ENCODE measurements at regions of chr19 and their contacts with region 1.

Region 1: GRCh38 chr19:2151339-2152229 is at the start of gene AP3D1:
- DNase-seq: peak; percentile 100
- H3K4me3 ChIP-seq: peak within 1 kb of the TSS; percentile 86 to 97 (median 96)
- H3K27ac ChIP-seq: peak within 1 kb of the TSS; percentile 53 to 97 (median 83)
- H3K4me1 ChIP-seq: peaks cover 17 to 29% of the 10 kb centered on the region in 2 donors
- H3K27me3 ChIP-seq: no peaks in the 10 kb centered on the region
- CTCF ChIP-seq: no peak
- POLR2A ChIP-seq: peak in 1 of 2 donors; percentile 36
- total RNA-seq, gene AP3D1: 51.3 to 193 (median 122) TPM

Region 2: GRCh38 chr19:2061495-2062381 is 89.8 kb before region 1 on chr19:
- intact Hi-C with region 1: no loop called
- DNase-seq: peak; percentile 99 to 100 (median 100)
- H3K4me3 ChIP-seq: peak overlapping the region in 2 of 4 donors; percentile 33 to 67
- H3K27ac ChIP-seq: peak overlapping the region; percentile 86 to 100 (median 98)
- H3K4me1 ChIP-seq: peaks cover 44 to 55% of the 10 kb centered on the region in 2 donors
- H3K27me3 ChIP-seq: no peaks in the 10 kb centered on the region
- CTCF ChIP-seq: no peak
- POLR2A ChIP-seq: peak; percentile 16 to 91

Region 3: DNA sequence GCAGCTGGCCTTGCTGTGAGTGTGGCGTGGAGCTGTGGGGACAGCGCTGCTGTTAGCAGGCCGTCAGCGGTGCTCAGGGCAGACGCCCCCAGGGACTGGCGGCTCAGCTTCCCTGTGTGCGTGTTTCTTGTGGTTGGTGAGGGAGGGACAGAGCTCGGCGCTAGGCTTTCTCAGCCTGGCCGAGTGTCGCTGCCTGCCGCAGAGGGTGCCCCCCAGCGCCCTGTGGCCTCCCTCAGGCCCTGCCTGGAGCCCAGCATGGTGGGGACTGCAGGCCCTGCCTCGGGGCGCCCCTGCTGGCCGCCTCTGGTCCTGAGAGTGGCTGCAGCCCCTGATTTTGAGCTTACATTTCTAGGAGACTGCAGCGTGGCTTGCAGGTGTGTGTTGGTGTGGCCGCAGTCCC is 47.6 kb after region 1 on chr19:
- intact Hi-C with region 1: no loop called
- DNase-seq: peak in 1 of 7 donors; percentile 58
- H3K4me3 ChIP-seq: no peak overlapping the region
- H3K27ac ChIP-seq: no peak overlapping the region
- H3K4me1 ChIP-seq: no peaks in the 10 kb centered on the region
- H3K27me3 ChIP-seq: no peaks in the 10 kb centered on the region
- CTCF ChIP-seq: peak in 2 of 6 experiments; percentile 12 to 14
- POLR2A ChIP-seq: no peak

Region 4: DNA sequence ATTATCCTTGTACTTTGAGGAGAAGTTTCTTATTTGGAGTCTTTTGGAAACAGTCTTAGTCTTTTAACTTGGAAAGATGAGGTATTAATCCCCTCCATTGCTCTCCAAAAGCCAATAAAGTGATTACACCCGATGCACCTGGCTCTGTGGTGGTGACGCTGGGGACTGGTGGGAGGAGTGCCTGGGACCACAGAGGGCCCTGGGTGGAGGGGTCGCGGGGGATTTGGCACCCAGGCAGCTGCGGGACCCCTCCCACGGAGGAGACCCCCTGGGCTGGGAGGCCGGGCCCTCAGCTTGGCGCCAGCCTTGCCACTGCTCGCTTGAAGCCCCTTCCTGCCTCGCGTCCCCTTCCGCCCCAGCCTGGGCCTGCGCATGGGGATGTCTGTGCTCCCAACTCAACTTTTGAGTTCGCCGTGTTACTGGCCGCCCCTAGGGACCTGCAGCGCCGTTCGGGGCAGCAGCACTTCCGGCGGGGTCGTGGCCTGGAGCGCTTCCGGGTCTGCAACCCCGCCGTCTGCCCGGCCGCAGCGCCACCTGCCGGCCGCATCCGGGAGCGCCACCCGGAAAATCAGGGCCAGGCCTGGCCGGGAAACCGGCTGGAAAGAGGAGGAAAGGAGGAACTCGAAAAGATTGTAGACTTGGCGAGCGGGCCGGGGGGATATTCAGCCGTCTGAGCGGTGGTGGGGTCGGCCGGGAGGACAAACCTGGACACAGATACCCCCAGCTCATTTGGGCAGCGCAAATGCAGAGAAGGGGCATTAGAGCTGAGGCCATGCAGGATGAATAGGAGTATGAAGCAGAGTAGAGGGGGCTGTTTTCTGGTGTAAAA is 122.0 kb after region 1 on chr19:
- intact Hi-C with region 1: loop called in 1 of 2 experiments (anchors 5 kb)
- DNase-seq: peak; percentile 65 to 84 (median 75)
- H3K4me3 ChIP-seq: peak overlapping the region in 1 of 4 donors; percentile 39
- H3K27ac ChIP-seq: peak overlapping the region in 4 of 5 donors; percentile 58 to 100 (median 77)
- H3K4me1 ChIP-seq: peaks cover 31 to 53% of the 10 kb centered on the region in 2 donors
- H3K27me3 ChIP-seq: no peaks in the 10 kb centered on the region
- CTCF ChIP-seq: peak; percentile 83 to 99 (median 97)
- POLR2A ChIP-seq: peak in 1 of 2 donors; percentile 13

Region 5: DNA sequence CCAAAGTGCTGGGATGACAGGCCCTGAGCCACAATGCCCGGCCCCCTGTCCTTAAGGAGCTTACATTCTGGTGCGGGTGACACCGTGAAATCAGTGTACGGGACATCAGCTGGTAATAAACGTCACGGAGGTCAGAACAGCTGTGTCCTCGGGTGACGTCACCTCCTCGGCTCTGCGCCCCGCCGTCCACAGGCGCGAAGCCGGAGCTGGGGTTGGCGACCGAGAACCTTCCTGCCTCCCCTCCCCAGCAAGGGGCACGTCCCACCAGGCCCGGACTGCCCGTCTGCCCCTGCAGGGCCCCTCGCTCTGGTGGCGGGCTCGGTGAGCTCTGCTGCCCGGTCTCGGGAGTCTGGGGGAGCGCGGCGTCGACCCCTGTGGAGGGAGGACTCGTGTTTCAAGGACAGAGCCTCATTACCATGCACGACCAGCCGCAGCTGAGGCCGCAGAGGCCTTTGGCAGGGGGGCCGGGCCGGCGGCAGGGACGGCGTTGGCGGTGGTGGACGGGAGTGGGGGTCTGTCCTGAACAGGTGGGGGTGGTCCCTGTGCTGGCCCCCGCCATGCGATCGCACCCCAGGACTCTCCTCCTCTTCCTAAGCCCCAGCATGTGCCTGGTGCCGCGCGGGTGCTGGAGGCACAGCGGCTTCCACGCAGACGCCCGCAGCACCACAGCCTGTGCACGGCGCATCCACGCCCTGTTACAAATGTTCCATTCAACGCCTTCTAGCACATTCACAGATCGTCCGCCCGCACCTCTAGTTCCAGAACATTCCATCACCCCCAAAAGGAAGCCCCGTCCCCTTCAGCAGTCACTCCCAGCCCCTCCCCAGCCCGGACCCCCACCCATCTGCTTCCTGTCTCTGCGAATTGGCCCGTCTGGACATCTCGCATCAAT is 151.0 kb after region 1 on chr19:
- intact Hi-C with region 1: no loop called
- DNase-seq: peak in 6 of 7 donors; percentile 56 to 80 (median 66)
- H3K4me3 ChIP-seq: no peak overlapping the region
- H3K27ac ChIP-seq: no peak overlapping the region
- H3K4me1 ChIP-seq: peaks cover 0 to 7% of the 10 kb centered on the region in 2 donors
- H3K27me3 ChIP-seq: peaks cover 24% of the 10 kb centered on the region
- CTCF ChIP-seq: no peak
- POLR2A ChIP-seq: no peak

Region 6: DNA sequence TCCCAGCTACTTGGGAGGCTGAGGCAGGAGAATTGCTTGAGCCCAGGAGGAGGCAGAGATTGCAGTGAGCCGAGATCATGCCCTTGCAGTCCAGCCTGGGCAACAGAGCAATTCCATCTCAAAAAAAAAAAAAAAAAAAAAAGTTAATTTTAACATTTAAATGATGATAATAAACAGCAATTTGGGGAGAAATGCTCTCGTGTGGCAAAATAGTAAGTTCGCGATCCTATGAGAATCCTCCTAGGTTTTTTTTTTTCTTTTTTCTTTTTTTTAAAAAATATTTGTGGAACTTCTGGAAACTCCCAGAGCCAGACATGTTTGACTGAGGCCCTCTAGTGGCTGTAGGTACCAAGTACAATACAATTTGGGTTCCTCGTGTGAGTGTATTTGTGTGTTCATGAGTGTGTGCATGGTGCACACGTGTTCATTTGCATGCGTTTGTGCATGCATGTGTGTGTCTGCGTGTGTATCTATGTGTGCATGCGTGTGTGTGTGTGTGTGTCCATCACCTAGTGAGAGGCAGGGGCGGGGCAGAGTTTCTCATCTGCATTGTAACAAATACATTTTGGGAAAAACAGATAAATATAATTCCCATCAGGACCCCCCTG is 239.6 kb after region 1 on chr19:
- intact Hi-C with region 1: loop called in 1 of 2 experiments (anchors 5 kb)
- DNase-seq: peak in 6 of 7 donors; percentile 35 to 71 (median 54)
- H3K4me3 ChIP-seq: no peak overlapping the region
- H3K27ac ChIP-seq: no peak overlapping the region
- H3K4me1 ChIP-seq: no peaks in the 10 kb centered on the region
- H3K27me3 ChIP-seq: peaks cover under 1% of the 10 kb centered on the region
- CTCF ChIP-seq: peak; percentile 55 to 94 (median 72)
- POLR2A ChIP-seq: no peak

Measured in adrenal gland (tissue), 19 donors.